ENCODE measurements at regions of chr17 and their contacts with region 1.

Region 1: DNA sequence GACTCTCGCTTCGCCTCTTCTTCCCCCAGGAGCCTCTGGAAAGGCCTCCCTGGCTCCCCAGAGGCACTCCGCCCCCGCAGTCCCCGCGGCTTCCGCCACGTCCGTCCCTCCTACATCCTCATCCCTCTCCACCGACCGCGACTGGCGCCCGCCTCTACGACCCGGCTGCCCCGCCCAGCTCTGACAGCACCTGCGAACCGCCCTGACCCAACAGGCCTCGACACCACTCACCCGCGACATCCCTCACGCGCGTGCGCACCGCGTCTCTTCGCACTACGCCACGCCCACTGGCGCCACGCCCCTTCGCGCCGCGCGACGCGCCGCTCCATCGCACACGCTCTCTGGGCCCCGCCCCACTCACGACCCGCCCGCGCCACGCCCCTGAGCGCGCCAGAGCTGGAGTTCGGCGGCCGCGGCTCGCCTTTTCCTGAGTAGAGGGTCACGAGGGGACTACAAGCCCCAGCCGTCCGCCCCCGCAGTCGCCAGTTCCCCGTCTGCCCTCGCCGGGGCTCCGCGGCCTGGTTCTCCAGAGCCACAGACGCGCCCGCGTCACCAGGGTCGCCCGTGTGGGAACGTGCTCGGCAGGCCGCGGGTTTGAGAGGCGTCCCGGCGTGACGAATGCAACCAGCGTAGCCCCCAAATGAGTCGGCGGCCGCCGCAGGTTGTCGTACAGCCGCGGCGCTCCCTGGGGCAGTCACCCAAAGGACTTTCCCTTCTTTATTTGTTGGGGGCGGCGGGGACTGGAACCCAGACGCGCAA is 56.2 kb upstream of the LRRC37A3 start:
- DNase-seq: peak; percentile 97 to 99 (median 98)
- H3K4me3 ChIP-seq: peak overlapping the region; percentile 29 to 83
- H3K4me3 Mint-ChIP-seq: peak overlapping the region; percentile 91 to 99 (median 94)
- H3K27ac ChIP-seq: peak overlapping the region; percentile 93
- H3K27ac Mint-ChIP-seq: peak overlapping the region; percentile 98 to 100 (median 99)
- H3K4me1 ChIP-seq: peaks cover 38% of the 10 kb centered on the region
- H3K4me1 Mint-ChIP-seq: peaks cover 28 to 65% (median 39%) of the 10 kb centered on the region in 4 donors
- H3K27me3 ChIP-seq: no peaks in the 10 kb centered on the region
- H3K27me3 Mint-ChIP-seq: no peaks in the 10 kb centered on the region

Region 2: DNA sequence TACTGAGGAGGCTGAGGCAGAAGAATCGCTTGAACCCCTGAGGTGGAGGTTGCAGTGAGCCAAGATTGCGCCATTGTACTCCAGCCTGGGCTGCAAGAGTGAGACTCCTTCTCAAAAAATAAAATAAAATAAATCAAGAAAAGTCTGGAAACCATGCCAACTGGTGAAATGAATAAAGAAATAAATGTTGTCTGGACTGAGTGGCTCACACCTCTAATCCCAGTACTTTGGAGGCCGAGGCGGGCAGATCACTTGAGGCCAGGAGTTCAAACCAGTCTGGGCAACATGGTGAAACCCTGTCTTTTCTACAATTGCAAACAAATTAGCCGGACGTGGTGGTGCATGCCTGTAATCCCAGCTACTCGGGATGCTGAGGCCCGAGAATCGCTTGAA is 55.5 kb before region 1 on chr17:
- CTCF ChIA-PET with region 1: interaction called, 3 read pairs
- POLR2A ChIA-PET with region 1: interaction called, 13 read pairs
- intact Hi-C with region 1: no loop called
- DNase-seq: peak in 1 of 5 donors; percentile 45
- H3K4me3 ChIP-seq: peak overlapping the region; percentile 47 to 61
- H3K4me3 Mint-ChIP-seq: peak overlapping the region; percentile 86 to 97 (median 88)
- H3K27ac ChIP-seq: peak overlapping the region; percentile 71
- H3K27ac Mint-ChIP-seq: peak overlapping the region; percentile 91 to 97 (median 95)
- H3K4me1 ChIP-seq: peaks cover 6% of the 10 kb centered on the region
- H3K4me1 Mint-ChIP-seq: peaks cover 2 to 18% (median 11%) of the 10 kb centered on the region in 4 donors
- H3K27me3 ChIP-seq: no peaks in the 10 kb centered on the region
- H3K27me3 Mint-ChIP-seq: no peaks in the 10 kb centered on the region

Region 3: GRCh38 chr17:65027305-65027704 is 51.8 kb after region 1 on chr17:
- CTCF ChIA-PET with region 1: no interaction called
- POLR2A ChIA-PET with region 1: interaction called, 21 read pairs
- intact Hi-C with region 1: loop called (anchors 2 kb)
- DNase-seq: peak; percentile 55 to 79 (median 58)
- H3K4me3 ChIP-seq: no peak overlapping the region
- H3K4me3 Mint-ChIP-seq: peak overlapping the region; percentile 75 to 90 (median 87)
- H3K27ac ChIP-seq: peak overlapping the region; percentile 49
- H3K27ac Mint-ChIP-seq: peak overlapping the region; percentile 90 to 98 (median 96)
- H3K4me1 ChIP-seq: peaks cover 99% of the 10 kb centered on the region
- H3K4me1 Mint-ChIP-seq: peaks cover 61 to 94% (median 78%) of the 10 kb centered on the region in 4 donors
- H3K27me3 ChIP-seq: no peaks in the 10 kb centered on the region
- H3K27me3 Mint-ChIP-seq: no peaks in the 10 kb centered on the region

Region 4: DNA sequence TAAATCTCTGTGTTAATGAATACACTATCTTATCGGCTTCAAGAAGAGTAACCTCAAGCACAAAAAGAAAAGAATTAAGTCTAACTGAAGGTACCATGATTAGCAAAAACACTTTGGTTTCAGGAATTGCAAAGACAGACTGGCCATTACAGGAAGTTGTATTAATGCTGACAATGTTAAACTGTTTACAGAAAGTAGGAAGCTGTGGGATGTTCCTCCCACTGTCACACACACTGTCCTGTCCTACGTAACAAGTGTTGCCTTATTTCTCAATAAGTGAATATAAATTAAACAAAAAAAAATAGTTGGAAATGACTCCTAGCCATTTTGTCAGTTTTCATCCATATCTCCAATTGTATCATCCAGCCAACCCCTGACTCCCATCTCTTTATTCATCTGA is 72.4 kb after region 1 on chr17:
- CTCF ChIA-PET with region 1: interaction called, 3 read pairs
- POLR2A ChIA-PET with region 1: interaction called, 35 read pairs
- intact Hi-C with region 1: no loop called
- DNase-seq: no peak
- H3K4me3 ChIP-seq: no peak overlapping the region
- H3K4me3 Mint-ChIP-seq: peak overlapping the region in 7 of 8 donors; percentile 26 to 70 (median 63)
- H3K27ac ChIP-seq: peak overlapping the region; percentile 47
- H3K27ac Mint-ChIP-seq: peak overlapping the region; percentile 2 to 83 (median 38)
- H3K4me1 ChIP-seq: peaks cover 96% of the 10 kb centered on the region
- H3K4me1 Mint-ChIP-seq: peaks cover 59 to 94% (median 77%) of the 10 kb centered on the region in 4 donors
- H3K27me3 ChIP-seq: no peaks in the 10 kb centered on the region
- H3K27me3 Mint-ChIP-seq: no peaks in the 10 kb centered on the region

Region 5: GRCh38 chr17:65122836-65123756 is 147.6 kb after region 1 on chr17:
- CTCF ChIA-PET with region 1: no interaction called
- POLR2A ChIA-PET with region 1: interaction called, 15 read pairs
- intact Hi-C with region 1: no loop called
- DNase-seq: peak; percentile 86 to 90 (median 88)
- H3K4me3 ChIP-seq: peak overlapping the region; percentile 4 to 57
- H3K4me3 Mint-ChIP-seq: peak overlapping the region; percentile 87 to 96 (median 92)
- H3K27ac ChIP-seq: peak overlapping the region; percentile 53
- H3K27ac Mint-ChIP-seq: peak overlapping the region; percentile 80 to 99 (median 99)
- H3K4me1 ChIP-seq: peaks cover 20% of the 10 kb centered on the region
- H3K4me1 Mint-ChIP-seq: peaks cover 11 to 27% (median 20%) of the 10 kb centered on the region in 4 donors
- H3K27me3 ChIP-seq: no peaks in the 10 kb centered on the region
- H3K27me3 Mint-ChIP-seq: peaks cover 0 to 5% of the 10 kb centered on the region in 2 donors